ENCODE measurements at regions of chr1 and their contacts with region 1.

Region 1: GRCh38 chr1:27031235-27032118 is 18.8 kb upstream of the TENT5B start:
- DNase-seq: peak in 1 of 2 experiments; percentile 38
- H3K4me3 ChIP-seq: no peak overlapping the region
- H3K4me1 ChIP-seq: no peaks in the 10 kb centered on the region; the same call in 1 of the 2 replicates
- H3K27me3 ChIP-seq: no peaks in the 10 kb centered on the region

Region 2: DNA sequence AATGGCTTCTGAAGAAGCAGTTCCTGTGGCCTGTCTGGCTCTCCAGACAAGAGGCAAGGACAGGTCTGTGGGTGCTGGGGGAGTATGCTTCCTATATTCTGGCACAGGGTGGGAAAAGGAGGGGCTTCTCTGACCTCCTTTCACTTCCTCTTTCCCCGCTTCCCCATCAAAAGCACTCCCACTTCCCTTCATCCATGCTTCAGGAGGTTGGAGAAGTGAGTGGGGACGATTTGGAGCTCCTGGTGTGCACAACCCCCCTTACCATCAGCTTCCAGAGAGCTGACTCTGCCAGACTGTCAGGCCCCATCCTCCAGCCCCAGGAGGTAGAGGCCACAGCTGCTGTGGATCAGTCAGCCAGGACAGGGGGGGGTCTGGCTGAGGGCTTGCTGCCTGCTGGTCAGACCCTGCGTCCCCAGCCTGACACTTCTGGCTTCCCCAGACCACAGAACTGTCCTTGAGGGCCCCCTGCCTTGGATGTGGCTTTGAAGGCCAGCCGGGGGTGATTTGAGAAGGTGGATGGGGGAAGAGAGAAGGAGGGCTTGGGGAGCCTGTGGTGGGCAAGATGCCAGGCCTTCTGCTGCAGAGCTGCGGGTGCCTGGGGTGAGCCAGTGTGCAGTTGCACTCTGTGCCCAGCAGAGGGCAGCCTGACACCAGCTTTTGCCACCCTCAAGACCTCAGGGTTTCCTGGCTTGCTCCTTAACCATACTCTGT is 269.0 kb after region 1 on chr1:
- in situ Hi-C with region 1: loop called (anchors 10 kb)
- DNase-seq: peak; percentile 77 to 85
- H3K4me3 ChIP-seq: no peak overlapping the region
- H3K4me1 ChIP-seq: no peaks in the 10 kb centered on the region
- H3K27me3 ChIP-seq: no peaks in the 10 kb centered on the region

Measured in HAP-1 (cell line).